ENCODE measurements at regions of chr14 and their contacts with region 1.

Region 1: DNA sequence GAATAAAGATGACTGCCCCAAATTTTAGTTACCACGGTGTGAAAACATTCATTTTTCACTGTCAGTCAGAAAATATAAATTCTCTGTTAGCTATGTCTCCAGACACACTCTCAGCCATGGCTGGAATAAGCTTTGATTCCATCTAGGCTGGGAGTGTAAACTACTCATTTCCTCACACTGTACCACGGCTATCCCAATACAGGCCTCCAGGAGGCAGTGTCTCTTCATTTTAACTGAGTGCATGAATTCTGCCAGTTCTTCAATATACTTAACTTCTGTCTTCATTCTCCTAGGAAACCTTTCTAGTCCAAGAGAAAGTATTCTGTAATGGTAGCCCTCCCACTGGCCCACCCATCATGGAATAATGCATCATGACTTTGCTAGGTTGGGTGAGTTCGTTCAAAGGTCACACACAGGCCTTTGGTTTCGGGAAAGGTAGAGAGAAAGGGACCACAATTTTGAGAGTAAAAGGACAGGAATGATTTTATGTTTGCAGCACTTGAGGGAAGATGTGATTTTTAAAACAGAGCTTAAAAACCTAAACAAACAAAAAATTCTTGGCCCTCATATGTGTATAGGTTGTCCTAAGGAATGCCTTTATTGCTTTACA is 381.1 kb downstream of the SEC23A start:
- DNase-seq: peak; percentile 13
- ATAC-seq: peak; percentile 63
- H3K4me3 ChIP-seq: no peak overlapping the region
- H3K27ac ChIP-seq: no peak overlapping the region
- H3K4me1 ChIP-seq: no peaks in the 10 kb centered on the region
- H3K27me3 ChIP-seq: no peaks in the 10 kb centered on the region
- CTCF ChIP-seq: peak; percentile 71

Region 2: GRCh38 chr14:38867561-38868150 is 145.7 kb after region 1 on chr14:
- CTCF ChIA-PET with region 1: interaction called, 5 read pairs
- POLR2A ChIA-PET with region 1: no interaction called
- in situ Hi-C with region 1: no loop called
- intact Hi-C with region 1: loop called (anchors 1 kb)
- DNase-seq: peak; percentile 17
- ATAC-seq: peak; percentile 88
- H3K4me3 ChIP-seq: no peak overlapping the region
- H3K27ac ChIP-seq: no peak overlapping the region
- H3K4me1 ChIP-seq: no peaks in the 10 kb centered on the region
- H3K27me3 ChIP-seq: no peaks in the 10 kb centered on the region
- CTCF ChIP-seq: peak; percentile 81